CD4-positive, alpha-beta T cell (primary cell): ENCODE measurements at regions of chr9 and their contacts with region 1.

Region 1: GRCh38 chr9:94681508-94681907 is 42.2 kb upstream of the FBP1 start:
- DNase-seq: peak; percentile 28 to 79 (median 46)
- ATAC-seq: peak; percentile 87
- H3K4me3 ChIP-seq: no peak overlapping the region
- H3K4me3 Mint-ChIP-seq: no peak overlapping the region
- H3K27ac ChIP-seq: no peak overlapping the region
- H3K27ac Mint-ChIP-seq: no peak overlapping the region
- H3K4me1 ChIP-seq: peaks cover 3% of the 10 kb centered on the region
- H3K4me1 Mint-ChIP-seq: no peaks in the 10 kb centered on the region
- H3K27me3 ChIP-seq: no peaks in the 10 kb centered on the region
- H3K27me3 Mint-ChIP-seq: peaks cover 24% of the 10 kb centered on the region
- CTCF ChIP-seq: peak; percentile 80

Region 2: GRCh38 chr9:94623253-94623652 is 58.3 kb before region 1 on chr9:
- CTCF ChIA-PET with region 1: no interaction called
- POLR2A ChIA-PET with region 1: no interaction called
- intact Hi-C with region 1: no loop called
- DNase-seq: peak in 2 of 14 experiments; percentile 22 to 33
- ATAC-seq: no peak
- H3K4me3 ChIP-seq: no peak overlapping the region
- H3K4me3 Mint-ChIP-seq: no peak overlapping the region
- H3K27ac ChIP-seq: no peak overlapping the region
- H3K27ac Mint-ChIP-seq: no peak overlapping the region
- H3K4me1 ChIP-seq: peaks cover 9% of the 10 kb centered on the region
- H3K4me1 Mint-ChIP-seq: peaks cover 7% of the 10 kb centered on the region
- H3K27me3 ChIP-seq: peaks cover 0 to 3% of the 10 kb centered on the region in 2 experiments
- H3K27me3 Mint-ChIP-seq: peaks cover 15% of the 10 kb centered on the region
- CTCF ChIP-seq: no peak

Region 3: DNA sequence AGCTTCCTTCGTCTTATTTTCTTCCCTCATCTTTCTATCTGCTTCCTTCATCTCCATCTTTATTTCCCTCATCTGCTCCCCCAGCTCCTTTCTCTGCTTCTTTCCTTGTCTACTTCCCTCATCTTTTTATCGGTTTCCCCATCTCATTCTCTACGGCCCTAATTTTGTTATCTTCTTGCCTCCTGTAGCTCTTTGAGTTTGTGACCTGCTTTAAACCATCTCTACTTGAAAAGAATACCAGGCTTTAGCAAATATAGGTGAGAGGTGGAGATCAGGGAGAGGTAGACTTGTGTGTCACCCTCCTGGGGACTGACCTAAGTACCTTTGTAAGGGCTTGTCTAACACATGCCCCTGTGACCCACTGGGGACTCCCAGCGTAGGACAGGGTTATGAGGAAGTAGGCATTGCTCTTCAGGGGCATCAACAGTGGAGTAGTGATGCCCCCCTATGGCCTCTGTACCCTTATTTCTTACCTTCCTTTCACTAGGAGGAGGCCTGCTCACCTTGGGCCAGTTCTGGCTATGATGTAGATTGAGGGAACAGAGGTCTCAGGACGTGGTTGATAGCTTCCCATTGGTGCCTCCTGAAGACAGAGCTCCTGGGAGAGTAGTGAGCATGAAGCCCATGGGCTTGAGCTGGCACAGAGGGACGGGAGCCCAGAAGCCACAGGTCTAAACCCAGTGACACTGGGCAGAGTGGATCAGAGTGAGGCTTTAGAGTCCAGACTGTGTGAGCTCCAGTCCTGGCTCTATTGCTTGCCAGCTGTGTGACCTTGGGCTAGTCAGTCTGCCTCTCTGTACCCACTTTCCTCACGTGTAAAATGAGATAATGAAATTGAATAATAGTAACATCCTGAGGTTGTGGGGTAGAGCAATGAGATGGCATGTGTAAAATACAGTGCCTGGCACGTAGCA is 236.6 kb after region 1 on chr9:
- CTCF ChIA-PET with region 1: no interaction called
- POLR2A ChIA-PET with region 1: no interaction called
- intact Hi-C with region 1: loop called (anchors 1 to 2 kb)
- DNase-seq: peak in 4 of 14 experiments; percentile 9 to 45 (median 28)
- ATAC-seq: peak; percentile 54
- H3K4me3 ChIP-seq: no peak overlapping the region
- H3K4me3 Mint-ChIP-seq: no peak overlapping the region
- H3K27ac ChIP-seq: no peak overlapping the region
- H3K27ac Mint-ChIP-seq: no peak overlapping the region
- H3K4me1 ChIP-seq: no peaks in the 10 kb centered on the region
- H3K4me1 Mint-ChIP-seq: no peaks in the 10 kb centered on the region
- H3K27me3 ChIP-seq: no peaks in the 10 kb centered on the region
- H3K27me3 Mint-ChIP-seq: no peaks in the 10 kb centered on the region
- CTCF ChIP-seq: no peak

Region 4: DNA sequence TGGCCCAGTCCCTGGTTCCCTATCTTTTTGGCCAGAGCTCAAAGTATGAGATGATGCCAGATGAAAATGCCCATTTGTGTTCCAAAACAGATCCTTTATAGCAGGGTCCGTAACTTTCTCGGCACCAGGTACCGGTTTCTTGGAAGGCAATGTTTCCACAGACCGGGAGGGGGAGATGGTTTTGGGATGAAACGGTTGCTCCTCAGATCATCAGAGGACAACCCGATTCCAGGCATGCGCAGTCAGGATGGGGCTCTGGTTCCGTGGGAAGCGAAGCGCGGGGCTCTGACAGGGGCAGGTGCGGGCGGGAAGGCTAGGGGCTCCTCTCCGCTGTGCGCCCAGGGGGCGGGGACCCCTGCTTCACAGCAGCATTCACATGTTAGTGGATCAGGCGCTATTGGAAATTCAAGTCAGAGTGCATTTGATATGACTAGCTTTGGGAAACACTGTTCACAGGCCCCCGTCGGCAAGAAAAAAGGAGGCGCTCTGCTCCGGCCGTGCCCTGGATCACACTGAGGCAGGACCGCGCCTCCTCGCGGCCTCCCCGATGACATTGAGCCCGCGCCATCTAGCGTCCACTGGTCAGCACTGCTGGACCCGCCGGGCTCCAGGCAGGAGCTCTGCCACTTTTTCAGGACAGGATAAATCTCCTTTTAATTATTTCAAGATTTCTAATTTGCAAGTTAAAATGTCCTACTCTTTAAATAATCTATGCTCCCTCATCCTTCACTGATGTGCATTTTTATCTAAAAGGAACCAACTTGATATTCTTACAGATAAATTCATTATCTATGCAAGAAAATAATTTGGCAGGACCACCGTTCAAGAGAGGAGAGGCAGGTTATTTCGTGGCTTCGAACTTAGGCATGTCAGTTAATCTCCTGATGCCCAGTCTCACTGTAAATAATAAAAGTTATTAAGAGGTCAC is 446.0 kb after region 1 on chr9:
- CTCF ChIA-PET with region 1: interaction called, 80 read pairs
- POLR2A ChIA-PET with region 1: interaction called, 3 read pairs
- intact Hi-C with region 1: loop called (anchors 1 kb)
- DNase-seq: peak; percentile 41 to 79 (median 64)
- ATAC-seq: peak; percentile 91
- H3K4me3 ChIP-seq: no peak overlapping the region
- H3K4me3 Mint-ChIP-seq: no peak overlapping the region
- H3K27ac ChIP-seq: no peak overlapping the region
- H3K27ac Mint-ChIP-seq: no peak overlapping the region
- H3K4me1 ChIP-seq: peaks cover 8% of the 10 kb centered on the region
- H3K4me1 Mint-ChIP-seq: peaks cover 5% of the 10 kb centered on the region
- H3K27me3 ChIP-seq: no peaks in the 10 kb centered on the region
- H3K27me3 Mint-ChIP-seq: no peaks in the 10 kb centered on the region
- CTCF ChIP-seq: peak; percentile 93

Region 5: DNA sequence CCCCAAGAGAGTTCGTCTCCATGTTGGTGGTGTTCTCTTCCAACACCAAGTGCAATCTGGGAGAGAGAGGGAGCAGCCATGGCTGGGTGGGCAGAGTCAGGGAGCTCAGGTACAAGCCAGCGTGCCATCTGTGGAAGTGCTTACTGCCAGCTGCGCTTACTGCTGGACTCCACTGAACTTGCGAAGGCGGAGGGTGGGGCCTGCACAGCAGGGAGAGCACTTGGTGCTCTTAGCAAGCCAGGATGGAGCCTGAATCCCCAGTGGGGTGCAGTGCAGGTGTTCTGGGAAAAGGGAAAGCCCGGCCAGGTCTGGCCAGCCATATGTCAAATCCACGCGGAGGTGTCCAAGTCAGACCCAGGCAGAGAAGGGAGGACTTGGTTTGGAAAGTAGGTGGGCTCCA is 494.0 kb after region 1 on chr9:
- CTCF ChIA-PET with region 1: interaction called, 3 read pairs
- POLR2A ChIA-PET with region 1: no interaction called
- intact Hi-C with region 1: loop called (anchors 5 kb)
- DNase-seq: no peak
- ATAC-seq: no peak
- H3K4me3 ChIP-seq: no peak overlapping the region
- H3K4me3 Mint-ChIP-seq: no peak overlapping the region
- H3K27ac ChIP-seq: no peak overlapping the region
- H3K27ac Mint-ChIP-seq: no peak overlapping the region
- H3K4me1 ChIP-seq: no peaks in the 10 kb centered on the region
- H3K4me1 Mint-ChIP-seq: no peaks in the 10 kb centered on the region
- H3K27me3 ChIP-seq: no peaks in the 10 kb centered on the region
- H3K27me3 Mint-ChIP-seq: no peaks in the 10 kb centered on the region
- CTCF ChIP-seq: no peak

Region 6: GRCh38 chr9:95181226-95181818 is 499.8 kb after region 1 on chr9:
- CTCF ChIA-PET with region 1: interaction called, 3 read pairs
- POLR2A ChIA-PET with region 1: no interaction called
- intact Hi-C with region 1: loop called (anchors 5 kb)
- DNase-seq: peak in 2 of 14 experiments; percentile 11 to 23
- ATAC-seq: no peak
- H3K4me3 ChIP-seq: no peak overlapping the region
- H3K4me3 Mint-ChIP-seq: no peak overlapping the region
- H3K27ac ChIP-seq: no peak overlapping the region
- H3K27ac Mint-ChIP-seq: no peak overlapping the region
- H3K4me1 ChIP-seq: no peaks in the 10 kb centered on the region
- H3K4me1 Mint-ChIP-seq: no peaks in the 10 kb centered on the region
- H3K27me3 ChIP-seq: no peaks in the 10 kb centered on the region
- H3K27me3 Mint-ChIP-seq: no peaks in the 10 kb centered on the region
- CTCF ChIP-seq: peak; percentile 75

Region 7: GRCh38 chr9:96217754-96218693 is 1536.5 kb after region 1 on chr9:
- CTCF ChIA-PET with region 1: no interaction called
- POLR2A ChIA-PET with region 1: no interaction called
- intact Hi-C with region 1: loop called (anchors 1 to 2 kb)
- DNase-seq: peak; percentile 42 to 85 (median 66)
- ATAC-seq: peak; percentile 89
- H3K4me3 ChIP-seq: peak overlapping the region; percentile 28
- H3K4me3 Mint-ChIP-seq: peak overlapping the region; percentile 79
- H3K27ac ChIP-seq: no peak overlapping the region
- H3K27ac Mint-ChIP-seq: no peak overlapping the region
- H3K4me1 ChIP-seq: peaks cover 20% of the 10 kb centered on the region
- H3K4me1 Mint-ChIP-seq: peaks cover 9% of the 10 kb centered on the region
- H3K27me3 ChIP-seq: peaks cover 26 to 31% of the 10 kb centered on the region in 2 experiments
- H3K27me3 Mint-ChIP-seq: peaks cover 73% of the 10 kb centered on the region
- CTCF ChIP-seq: peak; percentile 94

Region 8: GRCh38 chr9:96317335-96317980 is 1636.0 kb after region 1 on chr9:
- CTCF ChIA-PET with region 1: interaction called, 3 read pairs
- POLR2A ChIA-PET with region 1: no interaction called
- intact Hi-C with region 1: loop called in 1 of 2 experiments (anchors 1 kb)
- DNase-seq: peak in 13 of 14 experiments; percentile 4 to 72 (median 46)
- ATAC-seq: peak; percentile 58
- H3K4me3 ChIP-seq: no peak overlapping the region
- H3K4me3 Mint-ChIP-seq: no peak overlapping the region
- H3K27ac ChIP-seq: no peak overlapping the region
- H3K27ac Mint-ChIP-seq: no peak overlapping the region
- H3K4me1 ChIP-seq: no peaks in the 10 kb centered on the region
- H3K4me1 Mint-ChIP-seq: no peaks in the 10 kb centered on the region
- H3K27me3 ChIP-seq: no peaks in the 10 kb centered on the region
- H3K27me3 Mint-ChIP-seq: peaks cover 4% of the 10 kb centered on the region
- CTCF ChIP-seq: peak; percentile 84